H1 (cell line): ENCODE measurements at regions of chr4 and their contacts with region 1.

Region 1: GRCh38 chr4:87967193-87967592 is 8.3 kb upstream of the SPP1 start:
- DNase-seq: no peak
- H3K4me3 ChIP-seq: no peak overlapping the region
- H3K27ac ChIP-seq: no peak overlapping the region
- H3K4me1 ChIP-seq: peaks cover 0 to 4% (median 2%) of the 10 kb centered on the region in 4 experiments; a peak in 2 of 7 replicates
- H3K27me3 ChIP-seq: no peaks in the 10 kb centered on the region
- CTCF ChIP-seq: no peak
- EP300 ChIP-seq: no peak
- POLR2A ChIP-seq: no peak
- RAD21 ChIP-seq: no peak

Region 2: GRCh38 chr4:87476934-87477333 is 490.3 kb before region 1 on chr4:
- CTCF ChIA-PET with region 1: no interaction called
- POLR2A ChIA-PET with region 1: no interaction called
- DNase-seq: no peak
- H3K4me3 ChIP-seq: no peak overlapping the region
- H3K27ac ChIP-seq: no peak overlapping the region
- H3K4me1 ChIP-seq: peaks cover 0 to 13% (median 6%) of the 10 kb centered on the region in 4 experiments; a peak in 5 of 7 replicates
- H3K27me3 ChIP-seq: 0 out of 7 replicates have a peak, but pooled peaks cover 0 to 2% (median 0%) of the 10 kb centered on the region in 4 experiments
- CTCF ChIP-seq: no peak
- EP300 ChIP-seq: no peak
- POLR2A ChIP-seq: no peak
- RAD21 ChIP-seq: no peak

Region 3: GRCh38 chr4:87901422-87901992 is 65.7 kb before region 1 on chr4:
- CTCF ChIA-PET with region 1: interaction called, 12 read pairs
- POLR2A ChIA-PET with region 1: no interaction called
- DNase-seq: no peak
- H3K4me3 ChIP-seq: no peak overlapping the region
- H3K27ac ChIP-seq: no peak overlapping the region
- H3K4me1 ChIP-seq: peaks cover 0 to 3% (median 2%) of the 10 kb centered on the region in 4 experiments; a peak in 3 of 7 replicates
- H3K27me3 ChIP-seq: no peaks in the 10 kb centered on the region
- CTCF ChIP-seq: no peak
- EP300 ChIP-seq: no peak
- POLR2A ChIP-seq: no peak
- RAD21 ChIP-seq: no peak

Region 4: GRCh38 chr4:87912164-87913004 is 54.8 kb before region 1 on chr4:
- CTCF ChIA-PET with region 1: no interaction called
- POLR2A ChIA-PET with region 1: no interaction called
- DNase-seq: no peak
- H3K4me3 ChIP-seq: no peak overlapping the region
- H3K27ac ChIP-seq: no peak overlapping the region
- H3K4me1 ChIP-seq: peaks cover 8 to 18% (median 17%) of the 10 kb centered on the region in 4 experiments
- H3K27me3 ChIP-seq: no peaks in the 10 kb centered on the region
- CTCF ChIP-seq: no peak
- EP300 ChIP-seq: no peak
- POLR2A ChIP-seq: no peak
- RAD21 ChIP-seq: no peak

Region 5: GRCh38 chr4:87995435-87995834 is 28.2 kb after region 1 on chr4:
- CTCF ChIA-PET with region 1: no interaction called
- POLR2A ChIA-PET with region 1: no interaction called
- DNase-seq: no peak
- H3K4me3 ChIP-seq: no peak overlapping the region
- H3K27ac ChIP-seq: no peak overlapping the region
- H3K4me1 ChIP-seq: no peaks in the 10 kb centered on the region
- H3K27me3 ChIP-seq: peaks cover 0 to 1% (median 0%) of the 10 kb centered on the region in 4 experiments; a peak in 1 of 7 replicates
- CTCF ChIP-seq: no peak
- EP300 ChIP-seq: no peak
- POLR2A ChIP-seq: no peak
- RAD21 ChIP-seq: no peak

Region 6: DNA sequence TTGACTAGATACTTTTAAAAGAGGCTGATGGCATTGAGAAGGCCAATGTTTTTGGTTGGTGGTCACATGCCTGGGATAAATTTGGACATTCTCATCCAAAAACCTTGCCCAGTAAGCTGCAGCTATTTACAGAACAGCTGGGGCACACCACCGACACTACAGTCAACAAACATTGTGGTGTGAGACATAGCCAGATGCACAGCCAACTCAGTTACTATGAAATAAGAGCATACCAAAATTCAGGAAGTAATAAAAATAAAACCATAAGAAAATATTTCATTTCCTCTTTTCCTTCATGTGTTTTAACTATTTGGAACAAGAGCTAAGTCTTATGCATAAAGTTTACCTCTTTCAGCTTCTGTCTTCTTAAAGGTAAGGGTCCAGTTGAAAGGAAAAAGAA is 308.3 kb after region 1 on chr4:
- CTCF ChIA-PET with region 1: no interaction called
- POLR2A ChIA-PET with region 1: no interaction called
- DNase-seq: no peak
- H3K4me3 ChIP-seq: no peak overlapping the region
- H3K27ac ChIP-seq: no peak overlapping the region
- H3K4me1 ChIP-seq: no peaks in the 10 kb centered on the region
- H3K27me3 ChIP-seq: no peaks in the 10 kb centered on the region
- CTCF ChIP-seq: no peak
- EP300 ChIP-seq: no peak
- POLR2A ChIP-seq: no peak
- RAD21 ChIP-seq: no peak